Esophagus muscularis mucosa (tissue), 4 donors: ENCODE measurements at regions of chr9 and their contacts with region 1.

Region 1: DNA sequence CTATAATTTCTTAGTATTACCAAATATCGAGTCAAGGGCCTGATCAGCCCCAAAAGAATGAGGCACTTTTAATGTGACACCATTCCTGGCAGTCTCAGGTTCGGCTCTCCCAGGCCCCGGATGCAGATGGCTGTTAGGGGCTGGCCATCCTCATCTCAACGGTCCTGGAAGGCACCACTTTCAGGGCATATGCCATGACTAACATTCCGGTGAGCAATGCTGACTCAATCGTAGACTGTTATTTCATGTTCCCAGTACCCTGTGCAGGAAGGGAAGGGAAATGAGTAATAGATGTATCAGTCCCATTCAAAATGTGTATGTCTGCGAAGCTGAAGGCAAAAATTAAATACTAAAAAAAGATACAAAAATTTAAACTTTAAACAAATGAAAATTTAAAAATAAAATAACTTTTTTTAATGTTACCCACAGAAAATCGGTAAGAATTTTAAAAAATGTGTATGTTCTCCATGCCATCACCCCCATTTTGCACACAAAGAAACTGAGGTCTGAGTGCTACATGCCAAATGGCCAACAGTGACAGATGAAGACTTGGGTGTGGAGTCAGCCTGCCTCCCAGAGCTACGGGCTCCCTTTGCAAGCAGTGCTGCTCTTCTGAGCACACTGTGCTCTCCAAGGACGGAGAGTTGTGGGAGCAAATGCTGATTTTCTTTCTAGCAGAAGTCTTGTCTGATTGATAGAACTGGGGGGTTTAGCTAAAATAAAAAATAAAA is 79.0 kb downstream of the GLDC start:
- DNase-seq: no peak
- H3K4me3 ChIP-seq: no peak overlapping the region
- H3K27ac ChIP-seq: no peak overlapping the region
- H3K4me1 ChIP-seq: peaks cover 0 to 7% (median 0%) of the 10 kb centered on the region in 4 donors
- H3K27me3 ChIP-seq: peaks cover 0 to 9% (median 0%) of the 10 kb centered on the region in 4 donors
- CTCF ChIP-seq: no peak
- EP300 ChIP-seq: no peak
- POLR2A ChIP-seq: no peak

Region 2: DNA sequence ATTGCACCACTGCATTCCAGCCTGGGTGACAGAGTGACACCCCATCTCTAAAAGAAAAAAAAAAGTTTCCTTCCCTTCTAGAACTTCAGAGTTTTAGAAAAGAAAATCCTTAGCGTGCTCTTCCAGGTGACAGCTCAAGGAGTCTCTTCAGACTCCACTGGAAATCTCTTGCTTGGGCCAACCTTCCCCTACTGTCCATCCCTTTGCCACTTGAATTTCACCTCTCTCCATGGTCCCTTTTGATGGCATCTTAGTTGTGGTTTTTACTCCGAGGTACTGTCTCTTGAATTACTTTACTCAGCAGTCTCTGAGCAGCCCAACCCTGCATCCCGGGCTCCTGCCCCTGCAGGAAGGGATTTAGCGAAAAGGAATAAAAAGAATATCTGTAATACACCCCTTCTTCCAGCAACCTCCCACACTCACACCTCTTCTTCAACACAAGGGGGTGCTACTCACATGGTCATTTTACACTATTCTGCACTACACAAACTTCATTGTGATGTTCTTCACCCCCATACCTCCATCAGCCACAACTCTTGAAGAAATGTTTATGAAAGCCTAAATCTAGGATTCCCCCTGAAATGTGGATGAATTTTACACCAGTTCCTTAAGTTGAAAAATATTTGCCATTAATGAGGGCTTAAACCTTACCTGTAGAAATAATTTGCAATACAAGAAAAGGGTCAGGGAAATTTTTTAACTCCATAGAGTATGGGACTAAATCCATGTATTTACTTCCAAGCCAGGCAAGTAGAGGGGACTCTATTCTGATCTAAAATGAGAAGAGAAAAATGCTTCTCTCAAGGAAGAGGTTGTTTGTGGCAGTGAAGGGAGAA is 212.5 kb before region 1 on chr9:
- intact Hi-C with region 1: loop called (anchors 2 kb)
- DNase-seq: no peak
- H3K4me3 ChIP-seq: no peak overlapping the region
- H3K27ac ChIP-seq: no peak overlapping the region
- H3K4me1 ChIP-seq: no peaks in the 10 kb centered on the region
- H3K27me3 ChIP-seq: no peaks in the 10 kb centered on the region
- CTCF ChIP-seq: peak; percentile 70 to 80 (median 73)
- EP300 ChIP-seq: no peak
- POLR2A ChIP-seq: no peak

Region 3: DNA sequence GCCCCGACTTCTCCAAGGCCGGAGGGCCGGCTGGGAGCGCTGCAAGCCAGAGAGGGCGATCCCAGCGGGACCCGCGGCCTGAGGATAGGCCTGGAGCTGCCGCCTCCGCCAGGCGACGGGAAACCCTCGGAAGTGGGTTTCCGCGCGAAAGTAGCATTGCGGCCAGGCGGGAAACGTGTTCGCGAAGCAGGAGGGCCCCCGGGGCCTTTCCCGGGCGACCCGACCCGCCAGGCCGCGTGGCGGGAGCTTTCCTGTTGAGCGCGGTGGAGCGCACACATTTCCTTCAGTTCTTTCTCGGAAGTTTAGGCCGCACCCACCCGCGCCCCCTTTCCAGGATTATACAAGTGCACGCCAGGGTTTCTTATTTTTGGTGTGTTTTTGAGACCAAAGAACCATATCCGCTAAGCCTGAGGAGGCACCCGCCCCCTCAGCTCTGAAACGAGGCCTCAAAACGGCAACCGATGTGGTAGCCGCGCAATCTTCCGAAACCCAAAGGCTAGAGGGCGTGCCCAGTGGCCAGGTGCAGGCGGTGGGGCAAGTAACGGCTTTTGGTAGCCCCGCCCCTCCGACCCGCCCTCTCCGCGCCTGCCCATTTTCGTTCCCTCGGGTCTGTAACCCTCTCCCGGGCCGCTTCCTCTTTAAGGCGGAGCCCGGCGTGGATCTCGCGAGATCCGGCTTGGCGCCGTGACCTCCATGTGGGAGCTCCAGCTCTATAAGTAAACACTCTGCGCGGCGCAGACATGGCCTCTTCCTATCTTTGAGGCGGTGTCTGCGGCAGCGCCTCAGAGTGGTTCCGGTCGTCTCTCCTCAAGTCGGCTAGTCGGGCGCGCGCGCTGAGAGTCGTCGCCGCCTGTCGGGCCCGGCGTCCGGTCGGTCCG is 153.8 kb before region 1 on chr9 and contains the start of gene UHRF2:
- intact Hi-C with region 1: loop called (anchors 5 kb)
- DNase-seq: peak; percentile 99
- H3K4me3 ChIP-seq: peak within 1 kb of the TSS; percentile 87 to 98 (median 92)
- H3K27ac ChIP-seq: peak within 1 kb of the TSS; percentile 79 to 94 (median 89)
- H3K4me1 ChIP-seq: peaks cover 27 to 41% (median 37%) of the 10 kb centered on the region in 4 donors
- H3K27me3 ChIP-seq: peaks cover 0 to 3% (median 0%) of the 10 kb centered on the region in 4 donors
- CTCF ChIP-seq: peak in 1 of 3 experiments; percentile 16
- EP300 ChIP-seq: no peak
- POLR2A ChIP-seq: peak; percentile 11
- total RNA-seq, gene UHRF2: 31.1 to 44.4 (median 41.8) TPM

Region 4: DNA sequence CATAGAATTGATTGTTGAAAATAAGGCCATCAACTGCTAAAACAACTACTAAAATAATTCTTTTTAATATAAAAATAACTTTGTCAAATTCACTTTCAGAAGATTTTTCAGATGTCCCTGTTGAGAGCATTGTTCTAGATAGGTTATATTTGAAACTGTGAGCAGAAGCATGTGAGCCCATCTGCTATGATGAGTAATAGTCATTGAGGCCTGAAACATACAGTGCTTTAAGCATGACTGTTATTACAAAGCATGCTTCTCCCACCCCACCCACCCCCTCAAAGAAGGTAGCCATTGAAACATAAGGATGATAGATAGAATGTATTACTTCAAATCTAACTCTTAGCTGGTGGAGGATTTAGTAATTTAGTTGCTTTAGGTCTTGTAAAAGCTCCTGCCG is 67.6 kb before region 1 on chr9:
- intact Hi-C with region 1: no loop called
- DNase-seq: no peak
- H3K4me3 ChIP-seq: no peak overlapping the region
- H3K27ac ChIP-seq: no peak overlapping the region
- H3K4me1 ChIP-seq: no peaks in the 10 kb centered on the region
- H3K27me3 ChIP-seq: no peaks in the 10 kb centered on the region
- CTCF ChIP-seq: no peak
- EP300 ChIP-seq: no peak
- POLR2A ChIP-seq: no peak